HEK293T (cell line): ENCODE measurements at regions of chr11 and their contacts with region 1.

Region 1: DNA sequence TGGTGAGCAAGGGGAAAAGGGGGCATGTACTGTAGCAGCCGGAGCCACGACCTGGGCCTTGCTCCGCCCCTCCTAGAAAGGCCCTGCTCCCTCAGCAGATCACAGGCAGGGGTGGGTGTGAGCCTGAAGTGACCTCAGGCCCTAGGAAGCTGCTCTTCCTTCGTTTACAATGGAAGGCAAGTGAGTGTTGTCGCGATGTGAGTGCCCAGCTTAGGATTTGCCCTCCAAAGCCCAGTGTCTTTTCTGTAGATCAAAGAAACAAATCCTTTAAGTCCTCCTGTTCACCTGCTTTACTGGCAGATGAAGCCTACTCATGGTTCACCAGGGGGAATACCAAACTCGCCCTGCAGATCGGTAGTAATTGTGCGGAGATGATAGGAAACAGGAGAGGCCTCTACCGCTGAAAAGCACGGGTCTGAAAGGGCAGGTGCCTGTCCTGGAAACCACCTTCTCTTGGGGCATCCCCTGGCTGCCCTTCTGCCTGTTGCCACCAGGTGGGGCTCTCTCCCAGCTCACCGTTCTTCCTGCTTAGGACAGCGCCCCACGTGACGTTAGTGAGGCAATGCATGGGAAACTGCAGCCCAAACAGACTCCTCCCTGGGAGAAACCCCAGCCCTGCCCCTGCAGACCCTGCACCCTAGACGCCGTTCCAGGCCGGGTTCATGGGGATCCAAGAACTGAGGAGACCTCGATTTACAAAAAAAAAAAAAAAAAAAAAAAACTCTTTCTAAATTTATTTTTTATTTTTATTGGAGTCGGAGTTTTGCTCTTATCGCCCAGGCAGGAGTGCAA is 45.9 kb upstream of the RAB1B start:
- DNase-seq: peak; percentile 94

Region 2: GRCh38 chr11:66150140-66150539 is 72.4 kb before region 1 on chr11:
- CTCF ChIA-PET with region 1: no interaction called
- POLR2A ChIA-PET with region 1: no interaction called
- DNase-seq: no peak

Region 3: GRCh38 chr11:66172143-66172542 is 50.4 kb before region 1 on chr11:
- CTCF ChIA-PET with region 1: no interaction called
- POLR2A ChIA-PET with region 1: no interaction called
- DNase-seq: no peak

Region 4: GRCh38 chr11:66258473-66258893 is 35.9 kb after region 1 on chr11:
- CTCF ChIA-PET with region 1: interaction called, 10 read pairs
- POLR2A ChIA-PET with region 1: no interaction called
- DNase-seq: no peak

Region 5: DNA sequence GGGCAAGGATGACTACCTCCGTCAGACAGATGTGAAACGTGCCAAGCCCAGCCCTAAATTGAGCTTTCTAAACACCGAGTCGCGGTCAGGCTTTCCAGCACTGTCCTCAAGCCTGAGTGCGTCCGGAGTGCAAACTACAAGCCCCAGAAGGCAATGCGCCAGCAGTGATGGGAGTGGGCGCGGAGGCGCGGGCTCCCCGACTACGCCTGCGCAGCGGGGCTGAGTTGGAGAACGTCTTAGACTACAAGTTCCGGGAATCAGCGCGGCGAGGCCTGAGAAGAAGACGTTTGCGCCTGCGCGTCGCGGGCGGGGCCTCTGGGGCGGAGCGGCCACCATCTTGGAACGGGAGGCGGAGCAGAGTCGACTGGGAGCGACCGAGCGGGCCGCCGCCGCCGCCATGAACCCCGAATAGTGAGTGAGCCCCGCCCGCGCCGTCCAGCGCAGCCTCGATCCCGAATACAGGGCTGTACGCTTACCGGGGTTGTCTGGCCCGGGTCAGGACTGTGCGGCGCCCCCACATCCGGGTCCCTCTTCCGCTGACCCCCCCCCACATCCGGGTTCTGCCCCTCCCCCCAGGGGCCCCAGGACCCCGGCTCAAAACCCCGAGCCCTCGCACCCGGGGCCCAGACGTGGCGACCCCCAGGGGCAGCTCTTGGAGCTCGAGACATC is 45.9 kb after region 1 on chr11 and contains the start of gene RAB1B:
- CTCF ChIA-PET with region 1: interaction called, 4 read pairs
- POLR2A ChIA-PET with region 1: interaction called, 15 read pairs
- DNase-seq: peak; percentile 99